ENCODE measurements at regions of chr2 and their contacts with region 1.

Region 1: GRCh38 chr2:202609381-202610145 is 25.2 kb upstream of the FAM117B start:
- H3K4me3 Mint-ChIP-seq: peak overlapping the region; percentile 17
- H3K27ac Mint-ChIP-seq: peak overlapping the region; percentile 91
- H3K4me1 Mint-ChIP-seq: peaks cover 46% of the 10 kb centered on the region
- H3K27me3 Mint-ChIP-seq: no peaks in the 10 kb centered on the region

Region 2: DNA sequence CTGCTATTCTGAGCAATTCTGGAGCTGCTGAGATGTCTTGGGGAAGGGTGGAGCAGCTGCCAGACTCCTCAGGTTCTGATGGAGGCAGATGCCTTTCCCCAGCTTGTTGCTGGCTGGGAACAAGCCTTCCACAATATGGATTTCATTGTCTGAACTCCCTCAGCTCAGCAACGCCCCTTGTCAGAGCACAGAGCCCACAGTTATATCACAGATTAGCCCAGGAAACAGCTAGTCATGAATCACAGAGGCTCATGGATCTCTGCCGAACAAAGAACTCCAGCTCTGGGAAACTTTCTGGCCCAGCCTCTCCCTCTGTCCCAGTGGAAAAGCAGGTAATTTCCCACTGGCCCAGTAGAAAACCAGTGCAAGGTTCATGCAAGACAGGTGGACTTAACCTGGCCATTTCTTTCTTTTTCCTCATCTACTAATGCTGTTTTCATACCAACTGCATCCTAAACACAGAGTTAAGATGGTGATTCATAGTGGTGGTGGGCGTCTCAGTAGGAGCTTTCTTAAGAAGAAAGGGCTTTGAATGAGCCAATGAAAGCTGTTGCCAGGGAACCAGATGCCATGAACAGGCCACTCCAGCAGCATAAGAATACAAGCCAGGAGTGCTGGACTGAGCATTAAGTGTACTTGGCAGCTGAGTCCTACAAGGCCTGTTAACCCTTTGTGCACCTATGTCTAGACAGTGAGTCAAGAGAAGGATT is 545.2 kb before region 1 on chr2:
- intact Hi-C with region 1: no loop called
- H3K4me3 Mint-ChIP-seq: no peak overlapping the region
- H3K27ac Mint-ChIP-seq: no peak overlapping the region
- H3K4me1 Mint-ChIP-seq: peaks cover 10% of the 10 kb centered on the region
- H3K27me3 Mint-ChIP-seq: peaks cover 1% of the 10 kb centered on the region

Region 3: GRCh38 chr2:202577250-202578183 is 32.0 kb before region 1 on chr2:
- intact Hi-C with region 1: no loop called
- H3K4me3 Mint-ChIP-seq: no peak overlapping the region
- H3K27ac Mint-ChIP-seq: no peak overlapping the region
- H3K4me1 Mint-ChIP-seq: no peaks in the 10 kb centered on the region
- H3K27me3 Mint-ChIP-seq: no peaks in the 10 kb centered on the region

Region 4: DNA sequence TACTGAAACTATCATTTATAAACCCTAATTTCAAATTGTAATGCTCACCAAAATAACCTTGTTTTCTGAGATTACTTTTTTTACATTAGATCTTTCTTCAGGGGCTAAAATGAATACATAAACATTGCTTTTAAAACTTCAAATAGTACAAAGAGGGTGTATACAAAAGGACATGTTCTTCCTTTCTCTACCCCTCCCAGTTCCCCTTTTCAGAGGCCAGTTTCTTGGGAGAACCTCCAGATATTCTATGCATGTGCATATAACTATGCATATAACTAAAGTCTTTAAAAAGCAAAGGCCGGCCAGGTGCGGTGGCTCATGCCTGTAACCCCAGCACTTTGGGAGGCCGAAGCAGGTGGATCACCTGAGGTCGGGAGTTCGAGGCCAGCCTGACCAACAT is 14.6 kb after region 1 on chr2:
- intact Hi-C with region 1: loop called (anchors 1 kb)
- H3K4me3 Mint-ChIP-seq: peak overlapping the region; percentile 30
- H3K27ac Mint-ChIP-seq: peak overlapping the region; percentile 91
- H3K4me1 Mint-ChIP-seq: peaks cover 23% of the 10 kb centered on the region
- H3K27me3 Mint-ChIP-seq: no peaks in the 10 kb centered on the region

Region 5: DNA sequence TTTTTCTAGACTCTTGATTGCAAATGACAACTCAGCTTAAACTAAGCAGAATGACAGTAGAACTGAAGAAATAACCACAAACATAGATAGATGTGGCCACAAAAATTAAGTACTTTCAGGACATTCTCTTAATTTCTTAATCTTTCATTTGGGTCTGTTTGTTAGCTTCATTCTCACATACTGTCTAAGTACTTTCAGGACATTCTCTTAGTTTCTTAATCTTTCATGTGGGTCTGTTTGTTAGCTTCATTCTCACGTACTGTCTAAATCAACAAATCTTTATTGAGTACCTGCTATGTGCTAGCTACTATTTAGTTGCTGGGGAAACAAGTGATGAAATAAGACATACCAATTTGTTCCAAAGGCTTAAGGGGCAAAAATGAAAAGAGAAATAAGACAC is 60.3 kb after region 1 on chr2:
- intact Hi-C with region 1: loop called (anchors 2 kb)
- H3K4me3 Mint-ChIP-seq: no peak overlapping the region
- H3K27ac Mint-ChIP-seq: no peak overlapping the region
- H3K4me1 Mint-ChIP-seq: peaks cover 41% of the 10 kb centered on the region
- H3K27me3 Mint-ChIP-seq: no peaks in the 10 kb centered on the region

Measured in dendritic cell treated with granulocyte-macrophage colony-stimulating factor and Interleukin-4, amounts not matched to agents 40 ng/mL and 50 ng/mL, for 4 days (primary cell).